ENCODE measurements at regions of chr16 and their contacts with region 1.

Region 1: DNA sequence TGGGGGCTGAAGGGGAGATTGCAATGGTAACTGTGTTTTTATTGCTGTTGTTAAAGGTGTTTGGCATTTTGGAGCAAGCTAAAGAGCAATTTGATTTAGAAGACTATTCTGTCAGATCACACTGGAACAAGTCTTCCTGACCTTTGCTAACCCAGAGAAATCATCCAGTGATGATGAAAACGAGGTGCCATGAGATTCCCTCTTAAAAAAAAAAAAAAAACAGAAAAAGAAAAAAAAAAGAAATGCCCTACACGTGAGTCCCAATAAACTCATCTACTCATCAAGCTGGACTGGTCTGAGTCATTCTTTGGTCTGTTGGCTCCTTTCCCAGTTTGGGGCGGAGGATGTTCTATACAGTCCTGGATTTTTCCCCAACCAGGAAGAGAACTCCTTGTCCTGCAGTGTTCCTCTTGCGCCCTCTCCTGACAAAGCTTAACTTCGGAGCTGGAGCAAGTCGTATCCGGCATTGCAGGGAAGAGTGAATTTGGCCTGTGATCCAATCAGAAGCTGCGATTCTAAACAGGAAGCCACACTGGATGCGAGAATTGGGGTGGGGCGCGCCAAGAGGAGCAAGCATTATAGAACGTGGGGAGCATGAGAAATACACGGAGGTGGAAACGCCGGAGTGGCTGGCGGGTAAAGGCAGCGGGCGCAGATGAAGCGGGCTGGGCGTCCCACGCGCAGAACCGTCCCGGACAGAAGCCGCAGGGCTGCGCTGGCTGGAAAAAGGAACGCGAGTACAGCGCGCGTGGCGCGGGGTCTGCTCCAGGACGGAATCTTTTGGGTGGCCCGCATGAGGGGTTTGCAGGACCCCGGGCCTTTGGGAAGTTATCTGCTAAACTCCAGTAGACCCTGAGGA is 22.4 kb upstream of the CRYM start:
- DNase-seq: peak; percentile 72 to 97 (median 90)

Region 2: GRCh38 chr16:20327444-20328041 is 973.0 kb before region 1 on chr16 and contains the start of gene GP2:
- intact Hi-C with region 1: no loop called
- DNase-seq: no peak

Region 3: GRCh38 chr16:21158208-21159110 is 142.1 kb before region 1 on chr16 and contains the start of gene LDAF1:
- intact Hi-C with region 1: loop called (anchors 10 kb)
- DNase-seq: peak in 41 of 42 donors; percentile 27 to 86 (median 71)

Region 4: GRCh38 chr16:21184834-21185233 is 115.7 kb before region 1 on chr16:
- intact Hi-C with region 1: loop called (anchors 10 kb)
- DNase-seq: no peak